ENCODE measurements at regions of chr13 and their contacts with region 1.

Region 1: GRCh38 chr13:55992145-55992544 is 1148.6 kb upstream of the PRR20A start:
- DNase-seq: no peak
- H3K4me3 ChIP-seq: no peak overlapping the region
- CTCF ChIP-seq: no peak
- POLR2A ChIP-seq: no peak

Region 2: DNA sequence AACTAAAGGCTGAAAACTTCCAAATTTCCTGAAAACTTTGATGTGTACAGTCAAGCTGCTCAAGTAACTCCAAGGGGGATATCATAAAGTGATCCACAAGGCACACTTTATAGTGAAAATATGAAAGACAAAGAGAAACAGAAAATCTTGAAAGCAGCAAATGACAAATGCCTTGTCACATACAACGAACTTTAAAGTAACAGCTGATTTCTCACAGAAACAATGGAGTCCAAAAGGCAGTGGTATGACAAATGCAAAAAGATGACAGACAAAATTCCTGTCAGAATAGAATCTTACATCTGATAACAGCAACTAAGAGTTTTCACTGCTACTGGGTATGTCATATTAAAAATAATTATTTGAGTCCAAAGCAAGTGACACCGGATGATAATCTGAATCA is 453.7 kb before region 1 on chr13:
- intact Hi-C with region 1: no loop called
- DNase-seq: no peak
- H3K4me3 ChIP-seq: no peak overlapping the region
- CTCF ChIP-seq: no peak
- POLR2A ChIP-seq: no peak

Region 3: GRCh38 chr13:55571237-55571867 is 420.8 kb before region 1 on chr13:
- intact Hi-C with region 1: loop called (anchors 5 kb)
- DNase-seq: no peak
- H3K4me3 ChIP-seq: no peak overlapping the region
- CTCF ChIP-seq: no peak
- POLR2A ChIP-seq: no peak

Region 4: DNA sequence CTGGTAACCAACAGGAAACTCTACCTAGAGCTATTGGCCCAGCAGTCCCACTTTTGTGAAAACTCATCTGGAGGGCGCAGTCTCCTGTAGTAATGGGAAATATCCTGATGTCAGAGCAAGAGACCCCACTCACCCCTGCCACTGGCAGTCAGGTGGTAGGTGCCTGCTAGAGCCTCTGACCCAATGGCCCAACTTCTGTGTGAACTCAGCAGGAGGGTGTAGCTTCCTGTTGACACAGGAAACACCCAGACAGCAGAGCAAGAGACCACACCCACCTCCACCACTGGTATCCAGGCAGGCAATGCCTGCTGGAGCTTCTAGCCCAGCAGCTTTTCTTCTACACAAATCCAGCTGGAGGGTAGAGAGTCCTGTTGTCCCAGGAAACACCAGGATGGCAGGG is 28.2 kb before region 1 on chr13:
- intact Hi-C with region 1: no loop called
- DNase-seq: no peak
- H3K4me3 ChIP-seq: no peak overlapping the region
- CTCF ChIP-seq: no peak
- POLR2A ChIP-seq: no peak

Region 5: DNA sequence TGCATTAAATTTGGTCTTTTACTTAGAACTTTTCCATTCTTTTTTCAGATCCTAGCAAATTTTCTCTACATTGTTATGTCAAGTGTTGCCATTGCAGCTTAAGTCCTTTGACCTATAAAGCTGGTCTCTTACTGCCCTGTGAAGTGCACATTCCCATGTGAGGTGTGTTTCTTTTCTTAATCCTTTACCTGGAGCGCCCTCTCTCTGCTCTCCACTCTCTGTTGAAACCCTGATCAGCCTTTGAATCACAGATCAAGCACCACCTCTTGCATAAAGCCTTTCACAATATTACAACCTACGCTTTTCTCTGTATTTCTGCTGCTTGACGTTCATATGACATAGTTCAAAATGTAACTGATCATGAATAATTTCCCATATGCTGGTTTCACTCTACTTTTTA is 1724.2 kb after region 1 on chr13:
- intact Hi-C with region 1: no loop called
- DNase-seq: no peak
- H3K4me3 ChIP-seq: no peak overlapping the region
- CTCF ChIP-seq: no peak
- POLR2A ChIP-seq: no peak